CD14-positive monocyte (primary cell): ENCODE measurements at regions of chr1 and their contacts with region 1.

Region 1: DNA sequence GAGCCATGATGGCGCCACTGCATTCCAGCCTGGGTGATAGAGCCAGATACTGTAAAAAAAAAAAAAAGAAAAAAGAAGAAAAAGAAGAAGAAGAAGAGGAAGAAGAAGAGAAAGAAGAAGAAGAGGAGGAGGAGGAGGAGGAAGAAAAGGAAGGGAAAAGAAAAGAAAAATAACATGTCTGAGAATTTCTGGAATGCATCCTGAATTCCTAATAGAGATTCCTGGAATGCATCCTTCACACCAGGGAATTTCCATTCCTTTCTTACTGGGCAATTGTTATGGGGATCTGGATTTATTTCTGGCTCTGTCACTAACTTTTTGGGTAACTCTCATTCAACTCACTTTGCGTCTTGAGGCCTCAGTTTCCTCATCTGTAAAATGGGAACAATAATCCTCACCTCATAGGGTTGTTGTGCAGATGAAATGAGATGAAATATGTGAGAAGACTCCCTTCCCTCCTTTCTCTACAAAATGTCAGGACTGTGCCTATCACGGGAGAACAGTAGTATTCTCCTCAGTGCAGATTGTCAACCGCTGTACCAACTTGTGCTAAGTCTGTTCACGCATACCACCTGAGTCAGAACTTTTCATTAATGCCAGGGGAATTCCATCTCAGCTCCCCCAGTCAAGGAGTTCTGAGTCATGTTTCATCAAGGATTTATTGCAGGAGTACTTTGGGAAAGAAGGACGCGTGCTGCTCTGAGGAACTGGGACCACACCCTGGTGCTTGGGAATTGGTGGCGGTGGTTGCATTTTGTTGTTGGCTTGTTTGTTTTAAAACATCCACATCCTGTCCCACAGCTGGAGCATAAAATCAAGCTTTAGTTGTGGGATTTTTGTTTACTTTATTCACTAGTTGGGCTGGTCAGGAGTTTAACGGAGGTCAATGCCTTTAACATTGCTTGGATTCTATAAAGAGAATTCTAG is 42.4 kb upstream of the ROR1 start:
- DNase-seq: no peak
- H3K4me3 ChIP-seq: no peak overlapping the region
- H3K4me3 Mint-ChIP-seq: peak overlapping the region in 1 of 2 donors; percentile 61
- H3K27ac ChIP-seq: no peak overlapping the region
- H3K27ac Mint-ChIP-seq: no peak overlapping the region
- H3K4me1 ChIP-seq: no peaks in the 10 kb centered on the region
- H3K4me1 Mint-ChIP-seq: peaks cover 8% of the 10 kb centered on the region
- H3K27me3 ChIP-seq: no peaks in the 10 kb centered on the region
- H3K27me3 Mint-ChIP-seq: peaks cover 4 to 7% (median 4%) of the 10 kb centered on the region in 3 donors
- CTCF ChIP-seq: no peak

Region 2: GRCh38 chr1:65339866-65340468 is 1608.6 kb after region 1 on chr1:
- intact Hi-C with region 1: loop called in 1 of 2 experiments (anchors 10 kb)
- DNase-seq: no peak
- H3K4me3 ChIP-seq: no peak overlapping the region
- H3K4me3 Mint-ChIP-seq: no peak overlapping the region
- H3K27ac ChIP-seq: no peak overlapping the region
- H3K27ac Mint-ChIP-seq: no peak overlapping the region
- H3K4me1 ChIP-seq: no peaks in the 10 kb centered on the region
- H3K4me1 Mint-ChIP-seq: peaks cover 3% of the 10 kb centered on the region
- H3K27me3 ChIP-seq: no peaks in the 10 kb centered on the region
- H3K27me3 Mint-ChIP-seq: no peaks in the 10 kb centered on the region
- CTCF ChIP-seq: no peak